H1 (cell line): ENCODE measurements at regions of chr11 and their contacts with region 1.

Region 1: GRCh38 chr11:2151500-2152257 is 9.3 kb downstream of the INS start:
- DNase-seq: peak in 1 of 2 experiments; percentile 91
- H3K4me3 ChIP-seq: peak overlapping the region in 1 of 4 experiments; percentile 33; a peak in 2 of 8 replicates
- H3K27ac ChIP-seq: no peak overlapping the region
- H3K4me1 ChIP-seq: peaks cover 0 to 3% (median 2%) of the 10 kb centered on the region in 4 experiments; a peak in 4 of 7 replicates
- H3K27me3 ChIP-seq: peaks cover 17 to 35% (median 31%) of the 10 kb centered on the region in 4 experiments
- CTCF ChIP-seq: peak; percentile 66 to 84 (median 84)
- EP300 ChIP-seq: no peak
- POLR2A ChIP-seq: no peak
- RAD21 ChIP-seq: peak; percentile 86 to 87

Region 2: GRCh38 chr11:1694064-1694845 is 457.4 kb before region 1 on chr11:
- CTCF ChIA-PET with region 1: interaction called, 111 read pairs
- POLR2A ChIA-PET with region 1: interaction called, 3 read pairs
- DNase-seq: peak; percentile 84 to 98
- H3K4me3 ChIP-seq: peak overlapping the region in 3 of 4 experiments; percentile 29 to 59 (median 45); a peak in 3 of 8 replicates
- H3K27ac ChIP-seq: no peak overlapping the region
- H3K4me1 ChIP-seq: peaks cover 0 to 10% (median 3%) of the 10 kb centered on the region in 4 experiments; a peak in 3 of 7 replicates
- H3K27me3 ChIP-seq: peaks cover 0 to 7% (median 0%) of the 10 kb centered on the region in 4 experiments; a peak in 3 of 7 replicates
- CTCF ChIP-seq: peak; percentile 81 to 97 (median 86)
- EP300 ChIP-seq: peak in 1 of 2 experiments; percentile 49; a peak in 1 of 3 replicates
- POLR2A ChIP-seq: no peak
- RAD21 ChIP-seq: peak; percentile 91 to 95

Region 3: DNA sequence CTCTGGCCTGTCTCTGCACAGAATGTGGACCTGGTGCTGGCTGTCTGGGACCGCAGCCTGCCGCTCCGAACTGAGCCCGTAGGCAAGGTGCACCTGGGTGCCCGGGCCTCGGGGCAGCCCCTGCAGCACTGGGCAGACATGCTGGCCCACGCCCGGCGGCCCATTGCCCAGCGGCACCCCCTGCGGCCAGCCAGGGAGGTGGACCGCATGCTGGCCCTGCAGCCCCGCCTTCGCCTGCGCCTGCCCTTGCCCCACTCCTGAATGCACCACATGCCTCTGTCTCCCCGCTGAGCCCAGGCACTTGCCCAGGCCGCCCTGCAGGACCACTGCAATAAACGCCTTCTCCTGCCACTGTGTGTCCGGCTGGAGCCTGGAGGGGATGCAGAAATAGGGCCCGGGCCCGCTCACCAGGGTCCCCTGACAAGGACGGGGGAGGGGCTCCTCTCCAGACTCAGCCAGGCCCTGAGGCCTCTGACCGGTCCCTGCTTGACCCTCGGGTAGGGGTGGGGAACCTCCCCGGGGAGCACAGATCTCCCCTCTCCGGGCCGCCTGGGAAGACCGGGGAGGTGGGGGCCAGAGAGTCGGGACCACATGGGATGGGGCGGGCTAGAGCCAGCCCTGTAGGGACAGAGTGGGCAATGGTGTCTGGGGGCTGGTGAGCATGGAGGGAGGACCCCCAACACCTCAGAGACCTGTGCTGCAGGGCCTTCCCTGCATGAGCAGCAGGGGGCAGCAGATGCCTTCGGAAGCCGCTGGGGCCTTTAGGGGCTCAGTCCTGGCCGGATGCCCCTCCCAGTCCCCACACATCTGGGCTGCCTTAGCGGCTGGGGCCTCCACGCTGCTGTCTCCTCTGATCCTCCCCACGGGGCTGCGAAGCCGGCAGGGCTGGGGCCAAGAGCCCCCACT is 314.3 kb before region 1 on chr11:
- CTCF ChIA-PET with region 1: interaction called, 439 read pairs
- POLR2A ChIA-PET with region 1: no interaction called
- DNase-seq: peak; percentile 50 to 90
- H3K4me3 ChIP-seq: no peak overlapping the region
- H3K27ac ChIP-seq: no peak overlapping the region
- H3K4me1 ChIP-seq: peaks cover 0 to 4% (median 2%) of the 10 kb centered on the region in 4 experiments; a peak in 4 of 7 replicates
- H3K27me3 ChIP-seq: no peaks in the 10 kb centered on the region; a peak in 2 of 7 replicates
- CTCF ChIP-seq: peak; percentile 91 to 94 (median 94)
- EP300 ChIP-seq: no peak
- POLR2A ChIP-seq: no peak
- RAD21 ChIP-seq: peak; percentile 92 to 93

Region 4: GRCh38 chr11:1882519-1883238 is 269.0 kb before region 1 on chr11:
- CTCF ChIA-PET with region 1: interaction called, 170 read pairs
- POLR2A ChIA-PET with region 1: interaction called, 3 read pairs
- DNase-seq: peak; percentile 54 to 94
- H3K4me3 ChIP-seq: no peak overlapping the region
- H3K27ac ChIP-seq: no peak overlapping the region
- H3K4me1 ChIP-seq: peaks cover 0 to 5% (median 2%) of the 10 kb centered on the region in 4 experiments; a peak in 3 of 7 replicates
- H3K27me3 ChIP-seq: no peaks in the 10 kb centered on the region; a peak in 1 of 7 replicates
- CTCF ChIP-seq: peak; percentile 91 to 94 (median 92)
- EP300 ChIP-seq: no peak
- POLR2A ChIP-seq: no peak
- RAD21 ChIP-seq: peak; percentile 89 to 94

Region 5: GRCh38 chr11:1928470-1928890 is 223.2 kb before region 1 on chr11:
- CTCF ChIA-PET with region 1: interaction called, 29 read pairs
- POLR2A ChIA-PET with region 1: no interaction called
- DNase-seq: no peak
- H3K4me3 ChIP-seq: no peak overlapping the region
- H3K27ac ChIP-seq: no peak overlapping the region
- H3K4me1 ChIP-seq: peaks cover 0 to 3% (median 0%) of the 10 kb centered on the region in 4 experiments; a peak in 3 of 7 replicates
- H3K27me3 ChIP-seq: no peaks in the 10 kb centered on the region
- CTCF ChIP-seq: no peak
- EP300 ChIP-seq: no peak
- POLR2A ChIP-seq: no peak
- RAD21 ChIP-seq: no peak

Region 6: DNA sequence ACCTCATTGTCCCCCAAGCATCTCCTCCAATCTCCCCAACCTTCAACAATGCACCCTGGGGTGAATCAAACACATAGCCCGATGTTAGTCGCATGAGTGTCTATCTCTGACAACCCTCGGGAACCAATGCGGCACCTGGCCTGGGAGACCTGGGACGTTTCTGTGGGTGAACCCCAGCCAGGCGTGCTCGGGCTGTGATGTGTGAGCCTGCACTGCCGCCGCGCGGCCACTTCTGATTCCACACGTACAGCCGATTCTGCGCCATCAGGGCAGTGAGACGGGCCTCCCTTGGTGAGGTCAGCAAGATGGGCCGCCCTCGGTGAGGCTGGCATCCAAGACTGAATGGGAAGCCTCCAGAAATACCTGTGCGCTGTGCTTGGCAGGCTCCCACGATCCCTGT is 148.9 kb before region 1 on chr11:
- CTCF ChIA-PET with region 1: interaction called, 34 read pairs
- POLR2A ChIA-PET with region 1: no interaction called
- DNase-seq: no peak
- H3K4me3 ChIP-seq: no peak overlapping the region
- H3K27ac ChIP-seq: no peak overlapping the region
- H3K4me1 ChIP-seq: no peaks in the 10 kb centered on the region
- H3K27me3 ChIP-seq: no peaks in the 10 kb centered on the region
- CTCF ChIP-seq: no peak
- EP300 ChIP-seq: no peak
- POLR2A ChIP-seq: no peak
- RAD21 ChIP-seq: no peak

Region 7: GRCh38 chr11:2120359-2121100 is 31.1 kb before region 1 on chr11:
- CTCF ChIA-PET with region 1: interaction called, 21 read pairs
- POLR2A ChIA-PET with region 1: no interaction called
- DNase-seq: peak in 1 of 2 experiments; percentile 47
- H3K4me3 ChIP-seq: no peak overlapping the region
- H3K27ac ChIP-seq: no peak overlapping the region
- H3K4me1 ChIP-seq: peaks cover 0 to 5% (median 0%) of the 10 kb centered on the region in 4 experiments; a peak in 1 of 7 replicates
- H3K27me3 ChIP-seq: no peaks in the 10 kb centered on the region; a peak in 1 of 7 replicates
- CTCF ChIP-seq: peak; percentile 22 to 25 (median 22); a peak in 3 of 4 replicates
- EP300 ChIP-seq: no peak
- POLR2A ChIP-seq: no peak
- RAD21 ChIP-seq: 0 out of 4 replicates have a peak, but pooled peaks of 1 of the 2 experiments have one; percentile 3

Region 8: DNA sequence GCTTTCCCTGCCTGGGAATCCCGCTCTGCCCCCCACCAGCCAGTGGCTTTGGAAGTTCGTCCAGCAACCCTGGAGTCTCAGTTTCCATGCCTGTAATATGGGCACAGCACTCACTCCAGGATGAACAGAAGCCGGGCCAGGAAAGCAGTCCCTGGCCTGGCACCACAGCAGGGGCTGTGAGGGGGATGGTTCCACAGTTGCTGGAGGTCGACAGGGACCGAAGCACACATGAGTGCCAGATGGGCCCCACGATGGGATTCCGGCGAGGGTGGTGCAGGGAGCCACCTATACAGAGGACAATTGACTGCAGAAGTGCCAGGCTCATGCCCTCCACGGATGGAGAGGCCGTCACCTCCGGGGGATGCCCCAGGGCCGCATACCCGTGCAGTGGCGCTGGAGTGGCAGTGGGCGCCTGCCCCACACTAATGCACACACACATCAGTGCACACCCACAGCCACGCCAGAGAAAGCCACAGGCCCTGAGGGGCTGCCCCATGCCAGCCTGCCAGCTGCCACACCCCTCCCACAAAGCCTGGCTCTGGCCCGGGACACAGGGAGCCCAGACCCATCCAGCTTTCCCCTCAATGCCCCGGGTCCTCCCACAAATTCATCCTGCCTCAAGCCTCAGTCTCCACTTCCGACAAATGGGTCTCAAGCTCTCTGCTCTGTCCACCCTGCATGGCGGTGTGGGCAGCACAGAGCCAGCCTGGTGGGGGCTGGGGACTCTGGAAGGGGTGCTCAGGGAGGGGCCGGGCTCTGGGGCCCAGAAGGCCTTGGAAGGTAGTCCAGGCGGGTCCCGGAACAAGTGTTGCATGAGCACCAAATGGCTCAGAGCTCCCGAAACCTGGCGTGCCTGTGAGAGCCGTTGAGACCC is 109.0 kb after region 1 on chr11:
- CTCF ChIA-PET with region 1: no interaction called
- POLR2A ChIA-PET with region 1: no interaction called
- DNase-seq: no peak
- H3K4me3 ChIP-seq: no peak overlapping the region
- H3K27ac ChIP-seq: no peak overlapping the region
- H3K4me1 ChIP-seq: no peaks in the 10 kb centered on the region; a peak in 1 of 7 replicates
- H3K27me3 ChIP-seq: peaks cover 0 to 10% (median under 1%) of the 10 kb centered on the region in 4 experiments; a peak in 5 of 7 replicates
- CTCF ChIP-seq: no peak
- EP300 ChIP-seq: no peak
- POLR2A ChIP-seq: no peak
- RAD21 ChIP-seq: no peak

Region 9: DNA sequence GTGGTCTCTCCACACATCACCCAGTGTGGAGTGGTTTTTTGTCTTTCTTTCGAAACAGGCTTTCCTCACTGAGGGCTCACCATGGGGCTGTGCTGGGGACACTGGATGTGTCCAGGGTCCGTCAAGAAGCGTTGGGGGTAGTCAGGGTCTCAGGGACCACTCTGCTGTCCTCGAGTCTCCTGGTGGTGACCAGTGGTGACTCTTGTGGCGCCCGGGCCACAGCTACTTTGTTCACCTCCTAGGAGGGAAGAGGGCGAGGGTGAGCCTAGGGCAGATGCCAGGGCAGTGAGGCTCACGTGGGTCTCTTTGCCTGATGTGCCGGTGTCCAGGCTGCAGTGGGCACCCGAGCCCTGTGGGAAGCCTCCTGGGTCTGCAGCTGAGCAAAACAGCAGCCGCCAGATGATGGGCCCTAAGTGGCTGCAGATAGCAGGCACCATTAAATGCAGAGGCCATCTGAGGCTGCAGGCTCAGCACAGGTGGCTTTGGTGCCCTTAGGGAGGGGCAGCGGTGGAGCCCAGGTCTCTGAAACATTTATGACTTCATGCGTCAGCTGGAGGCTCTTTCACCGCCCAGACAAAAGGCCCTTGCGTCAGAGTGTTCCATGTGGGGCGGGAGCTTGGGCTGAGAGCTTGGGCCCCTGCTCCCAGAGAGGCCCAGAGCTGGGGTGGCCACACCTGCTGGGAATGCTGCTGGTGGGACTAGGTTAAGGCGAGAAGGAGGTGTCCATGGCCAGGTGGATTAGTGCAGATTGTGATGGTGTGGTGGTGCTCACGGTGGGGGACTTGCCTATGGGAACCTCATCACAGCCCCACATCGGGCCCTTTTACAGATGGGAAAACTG is 322.6 kb after region 1 on chr11:
- CTCF ChIA-PET with region 1: no interaction called
- POLR2A ChIA-PET with region 1: no interaction called
- DNase-seq: no peak
- H3K4me3 ChIP-seq: no peak overlapping the region
- H3K27ac ChIP-seq: no peak overlapping the region
- H3K4me1 ChIP-seq: no peaks in the 10 kb centered on the region
- H3K27me3 ChIP-seq: peaks cover 0 to 22% (median 14%) of the 10 kb centered on the region in 4 experiments; a peak in 6 of 7 replicates
- CTCF ChIP-seq: no peak
- EP300 ChIP-seq: no peak
- POLR2A ChIP-seq: no peak
- RAD21 ChIP-seq: no peak